IMR-90 (cell line): ENCODE measurements at regions of chr4 and their contacts with region 1.

Region 1: DNA sequence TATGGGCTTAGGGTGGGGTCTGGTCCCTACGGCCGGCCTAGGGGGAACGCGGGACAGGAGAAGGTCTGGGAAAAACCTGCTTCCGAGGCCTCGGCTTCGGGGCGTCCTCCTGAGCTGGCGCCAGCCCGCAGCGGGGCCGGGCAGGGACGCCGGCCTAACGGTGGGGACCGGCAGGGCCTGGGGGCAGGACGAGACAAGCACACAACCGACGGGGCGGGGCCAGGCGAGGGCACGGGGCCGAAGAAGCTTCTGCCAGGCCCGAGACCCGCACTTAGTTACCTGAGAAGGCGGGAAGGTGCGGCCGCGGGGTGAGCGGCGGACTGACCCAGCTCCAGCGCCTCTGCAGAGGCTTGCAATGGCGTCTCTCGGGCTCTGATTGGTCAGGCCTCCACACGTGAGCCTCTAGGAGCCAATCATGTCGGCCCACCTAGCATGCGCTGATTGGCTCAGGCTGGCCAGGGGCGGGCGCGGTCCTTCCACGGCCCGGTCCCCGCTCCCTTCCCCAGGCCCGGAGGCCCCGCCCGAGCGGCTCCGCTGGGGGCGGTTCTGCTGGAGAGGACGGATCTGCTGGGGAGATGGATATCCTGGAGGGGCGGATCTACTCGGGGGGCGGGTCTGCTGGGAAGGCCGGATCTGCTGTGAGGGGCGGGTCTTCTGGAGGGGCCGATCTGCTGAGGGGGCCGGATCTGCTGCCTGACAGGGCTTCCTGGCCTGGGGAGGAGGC is 44.3 kb downstream of the CPLX1 start:
- DNase-seq: peak; percentile 98
- ATAC-seq: peak; percentile 95
- H3K4me3 ChIP-seq: peak overlapping the region; percentile 89
- H3K27ac ChIP-seq: peak overlapping the region; percentile 87
- H3K4me1 ChIP-seq: peaks cover 5% of the 10 kb centered on the region
- H3K27me3 ChIP-seq: peaks cover 19% of the 10 kb centered on the region
- CTCF ChIP-seq: no peak
- POLR2A ChIP-seq: peak; percentile 92
- RAD21 ChIP-seq: no peak

Region 2: GRCh38 chr4:931960-932712 is 150.5 kb after region 1 on chr4 and contains the starts of genes GAK and TMEM175:
- CTCF ChIA-PET with region 1: no interaction called
- POLR2A ChIA-PET with region 1: no interaction called
- dilution Hi-C with region 1: no loop called
- in situ Hi-C with region 1: no loop called
- intact Hi-C with region 1: loop called (anchors 10 kb)
- DNase-seq: peak; percentile 94
- ATAC-seq: peak; percentile 98
- H3K4me3 ChIP-seq: peak within 1 kb of the TSS; percentile 78
- H3K27ac ChIP-seq: peak within 1 kb of the TSS; percentile 85
- H3K4me1 ChIP-seq: peaks cover 11% of the 10 kb centered on the region
- H3K27me3 ChIP-seq: no peaks in the 10 kb centered on the region
- CTCF ChIP-seq: no peak
- POLR2A ChIP-seq: peak; percentile 96
- RAD21 ChIP-seq: no peak; the same call in 1 of the 2 replicates
- total RNA-seq, gene GAK: 34.4 and 133 TPM in 2 replicates
- total RNA-seq, gene TMEM175: 7.7 and 9.2 TPM in 2 replicates